Transverse colon (tissue), 4 donors: ENCODE measurements at regions of chr14 and their contacts with region 1.

Region 1: DNA sequence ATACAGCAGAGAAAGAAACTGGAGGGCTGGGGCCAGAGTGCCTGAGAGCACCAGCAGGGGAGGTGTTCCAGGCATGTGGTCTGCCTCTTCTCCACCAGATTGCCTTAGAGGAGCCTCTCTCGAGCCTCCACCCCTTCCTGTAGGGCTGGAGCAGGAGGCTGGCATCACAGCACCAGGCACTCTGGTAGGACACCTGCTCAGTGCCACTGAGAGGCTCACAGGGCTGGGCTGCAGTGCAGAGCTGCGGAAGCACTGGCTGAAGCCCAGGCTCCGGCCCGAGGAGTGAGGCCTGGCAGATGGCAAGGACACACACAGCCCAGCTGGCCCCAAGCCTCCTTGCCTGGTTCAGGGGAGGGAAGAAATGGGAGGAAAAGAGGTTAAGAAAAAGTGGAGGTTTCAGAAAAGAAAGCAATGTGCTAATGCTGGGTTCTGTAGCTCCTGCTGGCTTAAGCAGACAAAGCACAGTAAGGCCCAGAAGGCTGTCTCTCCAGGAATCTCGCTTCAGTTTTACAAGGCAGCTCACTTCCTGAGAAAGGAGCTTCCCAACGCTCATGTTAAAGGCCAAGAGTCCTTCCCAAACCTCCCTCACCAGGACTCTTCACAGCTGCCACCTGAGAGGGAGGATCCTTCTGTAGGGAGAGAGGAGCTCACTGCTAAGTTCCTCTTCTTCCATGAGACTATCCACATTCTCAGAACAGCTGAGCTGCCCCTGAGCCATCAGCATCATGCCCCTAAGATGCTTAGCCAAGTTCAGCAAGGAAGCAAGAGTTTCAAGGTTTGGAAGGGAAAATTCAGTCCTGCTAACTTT is 23.8 kb downstream of the SPTB start:
- DNase-seq: no peak
- H3K4me3 ChIP-seq: no peak overlapping the region
- H3K27ac ChIP-seq: no peak overlapping the region
- H3K4me1 ChIP-seq: no peaks in the 10 kb centered on the region
- H3K27me3 ChIP-seq: no peaks in the 10 kb centered on the region
- CTCF ChIP-seq: no peak
- EP300 ChIP-seq: no peak
- POLR2A ChIP-seq: no peak

Region 2: GRCh38 chr14:64363265-64363846 is 492.6 kb before region 1 on chr14:
- in situ Hi-C with region 1: loop called in 1 of 4 experiments (anchors 25 kb)
- intact Hi-C with region 1: no loop called
- DNase-seq: no peak
- H3K4me3 ChIP-seq: no peak overlapping the region
- H3K27ac ChIP-seq: no peak overlapping the region
- H3K4me1 ChIP-seq: no peaks in the 10 kb centered on the region
- H3K27me3 ChIP-seq: no peaks in the 10 kb centered on the region
- CTCF ChIP-seq: no peak
- EP300 ChIP-seq: no peak
- POLR2A ChIP-seq: no peak

Region 3: GRCh38 chr14:64986578-64987571 is 130.9 kb after region 1 on chr14 and contains the start of gene FNTB:
- in situ Hi-C with region 1: no loop called
- intact Hi-C with region 1: no loop called
- DNase-seq: peak; percentile 96
- H3K4me3 ChIP-seq: peak within 1 kb of the TSS; percentile 48 to 83 (median 71)
- H3K27ac ChIP-seq: peak within 1 kb of the TSS; percentile 90 to 96 (median 91)
- H3K4me1 ChIP-seq: peaks cover 0 to 25% (median 16%) of the 10 kb centered on the region in 4 donors
- H3K27me3 ChIP-seq: no peaks in the 10 kb centered on the region
- CTCF ChIP-seq: peak; percentile 69 to 85 (median 79)
- EP300 ChIP-seq: no peak
- POLR2A ChIP-seq: peak; percentile 75
- total RNA-seq, gene FNTB: 6.5 to 77.2 (median 12.7) TPM